ENCODE measurements at regions of chr7 and their contacts with region 1.

Region 1: GRCh38 chr7:26151953-26152781 is at the start of gene NFE2L3:
- DNase-seq: peak; percentile 97
- H3K4me3 Mint-ChIP-seq: peak within 1 kb of the TSS; percentile 98
- H3K27ac Mint-ChIP-seq: peak within 1 kb of the TSS; percentile 84
- H3K4me1 Mint-ChIP-seq: peaks cover 46% of the 10 kb centered on the region
- H3K27me3 Mint-ChIP-seq: no peaks in the 10 kb centered on the region
- CTCF ChIP-seq: no peak
- total RNA-seq, gene NFE2L3: 74.3 and 108 TPM in 2 replicates

Region 2: DNA sequence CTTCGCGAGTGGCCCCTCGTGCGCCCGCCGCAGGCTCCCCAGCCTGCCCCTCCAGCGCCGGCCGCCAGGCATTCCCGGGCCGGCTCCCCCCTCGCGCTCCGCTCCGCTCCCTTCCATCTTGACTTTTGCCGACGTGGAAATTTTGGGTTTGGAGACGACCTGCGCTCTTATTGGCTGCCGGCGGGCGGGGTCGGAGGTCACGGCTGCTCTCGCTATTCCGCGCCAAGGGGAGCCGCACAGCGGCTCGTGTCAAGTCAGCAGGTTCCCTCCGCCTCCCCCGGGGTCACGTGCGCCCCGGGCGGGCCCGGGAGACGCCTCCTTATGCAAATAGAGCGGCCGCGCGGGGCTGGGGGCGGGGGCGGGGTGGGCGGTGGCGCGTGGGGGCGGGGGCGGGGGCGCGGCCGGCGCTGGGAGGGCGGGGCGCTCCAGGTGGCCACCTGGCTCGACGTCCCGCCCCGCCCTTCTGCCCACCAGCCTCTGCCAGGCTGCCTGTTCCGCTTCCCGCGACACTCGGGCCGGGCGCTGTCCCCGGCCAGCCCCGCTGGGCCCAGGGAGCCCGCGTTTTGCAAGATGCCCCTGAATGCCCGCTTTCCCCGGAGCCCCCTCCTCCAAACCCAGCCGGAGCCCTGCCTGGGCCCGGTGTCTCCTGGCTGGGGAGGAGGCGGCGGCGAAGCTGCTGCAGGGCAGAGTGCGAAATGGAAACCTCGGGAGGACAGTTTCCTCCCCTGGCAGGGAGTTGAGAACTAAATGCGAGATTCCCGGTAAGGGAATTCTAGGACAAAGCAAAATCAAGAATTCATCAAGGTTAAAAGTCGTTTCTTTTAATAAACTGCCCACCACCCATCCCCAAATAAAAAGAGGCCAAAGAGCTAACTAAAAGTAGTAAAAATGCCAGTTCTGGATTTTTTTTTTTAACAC is 200.9 kb before region 1 on chr7:
- CTCF ChIA-PET with region 1: no interaction called
- intact Hi-C with region 1: loop called (anchors 10 kb)
- DNase-seq: peak; percentile 96
- H3K4me3 Mint-ChIP-seq: peak overlapping the region; percentile 70
- H3K27ac Mint-ChIP-seq: peak overlapping the region; percentile 33
- H3K4me1 Mint-ChIP-seq: peaks cover 11% of the 10 kb centered on the region
- H3K27me3 Mint-ChIP-seq: no peaks in the 10 kb centered on the region
- CTCF ChIP-seq: no peak

Region 3: GRCh38 chr7:26090927-26091519 is 61.1 kb before region 1 on chr7:
- CTCF ChIA-PET with region 1: interaction called, 12 read pairs
- intact Hi-C with region 1: loop called (anchors 5 kb)
- DNase-seq: peak; percentile 27
- H3K4me3 Mint-ChIP-seq: no peak overlapping the region
- H3K27ac Mint-ChIP-seq: no peak overlapping the region
- H3K4me1 Mint-ChIP-seq: peaks cover 23% of the 10 kb centered on the region
- H3K27me3 Mint-ChIP-seq: no peaks in the 10 kb centered on the region
- CTCF ChIP-seq: peak; percentile 87

Region 4: GRCh38 chr7:26167301-26167934 is 15.3 kb after region 1 on chr7:
- CTCF ChIA-PET with region 1: interaction called, 18 read pairs
- intact Hi-C with region 1: no loop called
- DNase-seq: no peak
- H3K4me3 Mint-ChIP-seq: peak overlapping the region; percentile 40
- H3K27ac Mint-ChIP-seq: peak overlapping the region; percentile 83
- H3K4me1 Mint-ChIP-seq: peaks cover 44% of the 10 kb centered on the region
- H3K27me3 Mint-ChIP-seq: no peaks in the 10 kb centered on the region
- CTCF ChIP-seq: no peak